Psoas muscle (tissue), 8 donors: ENCODE measurements at regions of chr12 and their contacts with region 1.

Region 1: DNA sequence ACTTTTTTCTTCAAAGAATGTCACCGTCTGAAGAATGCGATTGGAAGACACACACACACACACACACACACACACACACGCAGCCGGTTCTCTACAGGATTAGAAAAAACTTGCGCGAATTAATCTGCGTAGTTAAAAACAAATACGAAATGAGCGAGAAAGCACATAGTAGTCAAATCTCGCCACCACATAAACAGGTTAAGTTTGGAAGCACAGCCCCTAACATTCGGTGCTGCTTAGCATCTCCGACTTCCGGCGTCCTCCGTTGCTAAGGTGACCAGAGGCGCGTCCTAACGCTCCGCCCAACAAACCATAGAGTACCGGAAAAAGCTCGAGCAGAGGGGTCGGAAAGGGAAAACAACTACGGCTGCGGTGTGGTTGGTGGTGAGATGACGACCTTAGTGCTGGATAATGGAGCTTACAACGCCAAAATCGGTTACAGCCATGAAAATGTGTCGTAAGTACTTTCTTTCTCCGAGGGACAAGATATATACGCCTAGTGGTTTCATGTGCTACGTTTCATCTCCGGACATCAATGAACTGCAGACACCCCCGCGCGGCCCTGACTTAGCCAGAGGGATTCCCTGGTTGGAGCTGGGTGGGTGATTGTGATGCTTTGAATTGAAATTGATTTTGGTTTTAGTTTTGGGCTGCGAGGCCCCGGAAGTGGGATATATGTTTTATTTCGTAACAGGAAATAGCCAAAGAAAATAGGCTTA is at the start of gene ACTR6:
- DNase-seq: peak; percentile 93 to 97
- ATAC-seq: peak; percentile 97 to 99 (median 98)
- H3K4me3 ChIP-seq: peak within 1 kb of the TSS; percentile 81
- H3K27ac ChIP-seq: peak within 1 kb of the TSS; percentile 78
- H3K4me1 ChIP-seq: peaks cover 12% of the 10 kb centered on the region
- H3K27me3 ChIP-seq: no peaks in the 10 kb centered on the region
- CTCF ChIP-seq: no peak
- total RNA-seq, gene ACTR6: 12.1 to 19.6 (median 17.6) TPM

Region 2: GRCh38 chr12:100069795-100070194 is 130.8 kb before region 1 on chr12:
- intact Hi-C with region 1: loop called in 1 of 2 experiments (anchors 5 kb)
- DNase-seq: no peak
- ATAC-seq: no peak
- H3K4me3 ChIP-seq: no peak overlapping the region
- H3K27ac ChIP-seq: no peak overlapping the region
- H3K4me1 ChIP-seq: no peaks in the 10 kb centered on the region
- H3K27me3 ChIP-seq: no peaks in the 10 kb centered on the region
- CTCF ChIP-seq: no peak

Region 3: DNA sequence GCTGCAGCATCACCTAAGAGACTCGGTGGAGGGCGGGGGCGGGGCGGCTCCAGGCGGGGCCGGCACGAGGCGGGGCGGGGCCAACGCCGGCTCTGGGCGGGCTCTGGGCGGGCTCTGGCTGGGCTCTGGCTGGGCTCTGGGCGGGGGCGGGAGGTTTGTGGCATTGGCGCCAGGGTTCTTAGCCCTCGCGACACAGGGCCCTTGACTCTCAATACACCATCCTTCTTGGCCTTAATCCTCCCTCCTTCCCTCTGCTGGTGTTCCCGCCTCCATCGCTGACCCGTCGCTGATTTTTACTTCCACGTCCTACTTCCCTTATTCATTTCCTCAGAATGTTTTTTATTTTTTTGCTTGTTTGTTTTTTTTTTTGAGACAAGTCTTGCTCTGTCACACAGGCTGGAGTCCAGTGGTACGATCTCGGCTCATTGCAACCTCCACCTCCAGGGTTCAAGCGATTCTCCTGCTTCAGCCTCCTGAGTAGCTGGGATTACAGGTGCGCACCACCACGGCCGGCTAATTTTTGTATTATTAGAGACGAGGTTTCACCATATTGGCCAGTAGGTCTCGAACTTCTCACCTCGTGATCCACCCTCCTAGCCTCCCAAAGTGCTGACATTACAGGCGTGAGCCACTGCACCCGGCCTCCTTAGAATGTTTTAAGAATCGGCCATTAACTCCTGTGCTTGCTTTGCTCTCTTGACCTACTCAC is 57.6 kb before region 1 on chr12 and contains the start of gene BLTP3B:
- intact Hi-C with region 1: loop called in 1 of 2 experiments (anchors 5 kb)
- DNase-seq: peak; percentile 95
- ATAC-seq: peak; percentile 95 to 98 (median 96)
- H3K4me3 ChIP-seq: peak within 1 kb of the TSS; percentile 98
- H3K27ac ChIP-seq: peak within 1 kb of the TSS; percentile 98
- H3K4me1 ChIP-seq: peaks cover 20% of the 10 kb centered on the region
- H3K27me3 ChIP-seq: no peaks in the 10 kb centered on the region
- CTCF ChIP-seq: no peak
- total RNA-seq, gene BLTP3B: 21.0 to 34.6 (median 26.9) TPM

Region 4: GRCh38 chr12:100185361-100185894 is 15.2 kb before region 1 on chr12:
- intact Hi-C with region 1: no loop called
- DNase-seq: no peak
- ATAC-seq: no peak
- H3K4me3 ChIP-seq: no peak overlapping the region
- H3K27ac ChIP-seq: no peak overlapping the region
- H3K4me1 ChIP-seq: no peaks in the 10 kb centered on the region
- H3K27me3 ChIP-seq: no peaks in the 10 kb centered on the region
- CTCF ChIP-seq: no peak

Region 5: DNA sequence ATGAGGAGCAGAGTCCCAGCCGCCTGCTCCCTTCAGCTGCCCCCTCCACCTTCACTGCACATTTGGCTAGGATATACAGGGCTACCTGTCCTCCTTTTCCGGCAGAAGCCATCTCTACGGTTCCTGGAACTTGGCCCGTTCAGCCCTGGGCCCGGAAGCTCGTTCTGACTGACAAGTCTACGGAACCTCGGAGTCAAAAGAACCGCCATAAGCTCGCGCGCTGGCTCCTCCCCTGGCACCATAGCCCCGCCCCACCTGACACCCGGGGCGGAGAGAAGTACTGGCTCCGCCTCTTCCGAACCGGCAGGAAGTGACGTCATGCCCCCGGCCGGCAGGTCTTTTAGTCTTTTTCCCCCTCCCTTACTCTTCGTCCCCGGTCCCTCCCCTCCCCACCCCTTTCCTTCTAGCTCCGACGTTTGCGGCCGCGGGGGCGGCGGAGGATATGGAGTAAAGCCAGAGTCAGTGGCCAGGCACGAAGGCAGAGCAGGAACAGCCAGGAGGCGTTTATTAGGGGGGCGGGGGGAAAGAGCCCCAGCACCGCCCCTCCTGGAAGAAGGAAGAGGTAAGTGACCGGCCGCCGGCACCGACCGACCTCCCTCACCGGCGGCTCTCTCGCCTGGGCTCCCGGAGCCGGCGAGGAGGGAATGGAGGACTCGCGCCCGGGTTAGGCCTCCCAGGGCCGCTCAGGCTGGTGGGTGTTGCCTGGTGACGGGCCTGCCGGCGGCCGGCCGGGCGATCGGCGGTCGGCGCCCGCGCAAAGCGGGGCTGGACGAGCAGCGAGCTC is 66.4 kb after region 1 on chr12 and contains the starts of genes DEPDC4 and SCYL2:
- intact Hi-C with region 1: loop called in 1 of 2 experiments (anchors 5 kb)
- DNase-seq: peak; percentile 94 to 97
- ATAC-seq: peak; percentile 97 to 98 (median 97)
- H3K4me3 ChIP-seq: peak within 1 kb of the TSS; percentile 96
- H3K27ac ChIP-seq: peak within 1 kb of the TSS; percentile 97
- H3K4me1 ChIP-seq: peaks cover 18% of the 10 kb centered on the region
- H3K27me3 ChIP-seq: no peaks in the 10 kb centered on the region
- CTCF ChIP-seq: no peak
- total RNA-seq, gene DEPDC4: 0.32 to 1.4 (median 0.47) TPM in 3 of 4 donors, not detected in the other
- total RNA-seq, gene SCYL2: 23.3 to 29.0 (median 28.3) TPM

Region 6: GRCh38 chr12:100356644-100357223 is 156.1 kb after region 1 on chr12 and contains the start of gene SLC17A8:
- intact Hi-C with region 1: no loop called
- DNase-seq: no peak
- ATAC-seq: no peak
- H3K4me3 ChIP-seq: no peak within 1 kb of the TSS
- H3K27ac ChIP-seq: no peak within 1 kb of the TSS
- H3K4me1 ChIP-seq: no peaks in the 10 kb centered on the region
- H3K27me3 ChIP-seq: peaks cover 0 to 6% (median 2%) of the 10 kb centered on the region in 3 donors
- CTCF ChIP-seq: no peak
- total RNA-seq, gene SLC17A8: not detected